PC-9 (cell line): ENCODE measurements at regions of chr3 and their contacts with region 1.

Region 1: DNA sequence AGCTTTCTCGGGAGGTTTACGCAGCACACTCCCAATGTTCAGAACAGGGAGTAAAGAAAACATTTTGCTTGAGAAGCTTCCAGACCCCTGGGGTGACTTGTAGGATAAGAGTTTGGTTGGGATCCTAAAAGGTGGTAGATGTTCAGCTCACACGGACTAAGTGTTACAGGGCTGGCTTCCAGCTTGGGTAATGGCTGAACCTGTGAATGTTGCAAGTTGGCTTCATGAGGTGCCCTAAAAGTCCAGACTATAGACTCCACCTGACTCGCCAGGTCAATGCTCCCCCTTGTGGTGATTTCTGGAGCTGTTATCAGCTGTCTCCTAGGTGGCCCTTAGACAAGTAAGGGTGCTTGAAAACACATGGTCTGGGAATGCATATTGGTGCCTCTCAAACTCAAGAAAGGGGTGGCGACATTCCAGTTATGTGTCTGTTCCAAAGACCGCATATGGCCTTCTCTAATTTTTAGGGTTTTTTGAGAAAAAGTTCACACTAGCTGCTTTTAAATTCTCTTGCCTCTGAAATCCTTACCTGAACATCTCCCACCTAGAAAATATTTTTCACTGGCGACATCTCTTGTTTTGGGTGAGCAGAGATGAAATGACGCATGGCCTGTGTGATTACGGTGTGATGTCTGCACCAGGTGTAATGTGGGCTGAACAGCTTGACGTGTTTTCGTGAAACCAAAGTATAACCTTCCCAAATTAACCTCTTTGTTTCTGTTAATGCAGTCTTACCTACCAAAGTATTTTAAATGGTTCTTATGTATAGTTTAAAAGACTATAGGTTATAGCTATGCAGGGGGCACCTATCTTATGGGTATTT is 175.7 kb upstream of the KBTBD8 start:
- DNase-seq: peak in 1 of 2 experiments; percentile 41
- H3K4me3 ChIP-seq: no peak overlapping the region
- H3K27ac ChIP-seq: no peak overlapping the region
- H3K4me1 ChIP-seq: no peaks in the 10 kb centered on the region
- H3K27me3 ChIP-seq: no peaks in the 10 kb centered on the region
- CTCF ChIP-seq: peak; percentile 72

Region 2: GRCh38 chr3:65385805-65386204 is 1436.6 kb before region 1 on chr3:
- CTCF ChIA-PET with region 1: interaction called, 12 read pairs
- POLR2A ChIA-PET with region 1: no interaction called
- intact Hi-C with region 1: no loop called
- DNase-seq: no peak
- H3K4me3 ChIP-seq: no peak overlapping the region
- H3K27ac ChIP-seq: no peak overlapping the region
- H3K4me1 ChIP-seq: no peaks in the 10 kb centered on the region
- H3K27me3 ChIP-seq: no peaks in the 10 kb centered on the region
- CTCF ChIP-seq: no peak

Region 3: DNA sequence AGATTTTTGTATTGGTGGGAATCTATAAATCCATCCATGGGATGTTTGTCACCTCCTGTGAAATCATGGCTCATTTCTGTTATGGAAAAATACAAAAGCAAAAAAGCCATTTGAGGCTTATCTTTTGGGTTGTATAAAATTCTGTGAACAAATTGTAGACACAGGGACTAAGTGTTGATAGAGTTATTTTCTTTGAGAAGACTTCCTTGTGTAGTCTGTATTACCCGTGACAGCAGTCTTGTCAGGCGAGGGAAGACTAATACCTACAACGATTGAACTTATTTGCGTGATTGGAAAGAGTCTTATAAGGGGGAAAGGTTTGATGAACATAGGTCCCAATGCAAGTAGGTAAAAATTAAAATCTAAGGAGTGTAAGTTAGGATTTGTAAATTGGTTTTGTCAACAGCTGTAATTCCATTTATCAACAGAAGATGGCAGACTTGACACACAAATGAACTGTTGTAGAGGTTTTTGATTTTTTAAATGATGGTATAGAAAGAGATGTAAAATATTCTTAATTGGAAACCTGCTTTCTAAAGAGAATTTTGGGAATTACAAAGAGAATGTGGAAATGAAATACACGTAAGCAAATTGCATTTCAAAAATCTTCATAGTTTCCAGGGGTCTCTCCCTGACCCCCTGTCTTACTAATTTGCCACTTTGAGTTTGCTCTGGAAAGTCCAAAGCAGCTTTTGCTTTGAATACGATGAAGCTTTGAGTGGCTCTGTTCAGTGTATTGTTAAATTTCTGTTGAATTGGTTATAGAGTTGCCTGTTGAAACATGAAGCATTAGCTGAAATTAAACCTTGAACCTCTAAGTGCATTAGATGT is 568.4 kb before region 1 on chr3:
- CTCF ChIA-PET with region 1: no interaction called
- POLR2A ChIA-PET with region 1: no interaction called
- intact Hi-C with region 1: loop called (anchors 2 kb)
- DNase-seq: no peak
- H3K4me3 ChIP-seq: no peak overlapping the region
- H3K27ac ChIP-seq: no peak overlapping the region
- H3K4me1 ChIP-seq: no peaks in the 10 kb centered on the region
- H3K27me3 ChIP-seq: no peaks in the 10 kb centered on the region
- CTCF ChIP-seq: peak; percentile 74

Region 4: DNA sequence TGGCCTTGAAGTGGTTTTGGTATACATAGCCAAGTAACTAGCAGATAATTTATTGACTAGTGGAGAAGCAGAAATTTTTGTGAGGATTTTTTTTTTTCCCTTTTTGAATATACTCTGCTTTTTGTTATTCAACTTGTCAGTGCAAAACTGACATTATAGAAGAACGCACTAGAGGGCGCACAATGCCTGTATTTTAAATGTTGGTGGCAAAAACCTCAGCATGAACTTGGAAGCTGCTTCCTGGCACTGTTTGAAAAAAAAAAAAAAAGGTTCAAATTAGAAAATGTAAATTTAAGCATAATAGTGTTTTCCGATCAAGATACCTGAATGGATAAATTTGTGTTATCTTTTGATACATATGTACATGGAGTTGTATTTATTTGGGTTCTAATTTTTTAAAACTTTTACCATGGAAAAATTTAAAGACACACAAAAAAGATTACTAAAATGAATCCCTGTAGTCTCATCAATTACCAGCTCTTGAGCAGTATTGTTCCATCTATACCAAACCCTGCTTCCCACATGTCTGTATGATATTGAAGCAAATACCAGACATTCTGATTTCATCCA is 545.6 kb before region 1 on chr3:
- CTCF ChIA-PET with region 1: no interaction called
- POLR2A ChIA-PET with region 1: no interaction called
- intact Hi-C with region 1: loop called (anchors 2 kb)
- DNase-seq: peak; percentile 34 to 43
- H3K4me3 ChIP-seq: no peak overlapping the region
- H3K27ac ChIP-seq: no peak overlapping the region
- H3K4me1 ChIP-seq: no peaks in the 10 kb centered on the region
- H3K27me3 ChIP-seq: no peaks in the 10 kb centered on the region
- CTCF ChIP-seq: peak; percentile 71